ENCODE measurements at regions of chr11 and their contacts with region 1.

Region 1: DNA sequence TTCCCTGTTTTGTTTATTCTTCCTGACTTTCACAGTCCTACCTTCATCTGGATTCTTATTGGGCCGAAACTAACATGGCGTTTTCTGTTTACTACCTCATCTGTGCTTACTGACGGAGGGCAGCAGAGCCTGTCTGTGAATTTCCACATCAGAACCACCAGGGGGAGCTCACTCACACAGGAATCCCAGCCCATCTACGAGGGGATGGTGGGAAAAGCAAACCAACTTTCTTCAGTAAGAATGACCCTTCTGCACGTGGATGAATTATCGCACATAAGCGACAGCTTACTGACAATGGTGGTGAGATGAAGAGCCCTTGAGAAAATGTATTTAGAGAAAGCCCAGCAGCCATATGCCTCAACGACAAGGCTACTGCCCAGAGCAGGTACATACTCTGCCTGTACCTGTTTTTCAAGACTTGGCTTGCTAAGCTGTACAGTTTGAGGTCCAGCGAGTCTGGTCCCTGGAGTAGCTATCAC is 42.5 kb downstream of the LARGE2 start:
- DNase-seq: peak; percentile 77
- CTCF ChIP-seq: peak; percentile 91

Region 2: GRCh38 chr11:45606514-45607281 is 358.3 kb before region 1 on chr11:
- CTCF ChIA-PET with region 1: no interaction called
- POLR2A ChIA-PET with region 1: no interaction called
- DNase-seq: no peak
- CTCF ChIP-seq: no peak

Region 3: GRCh38 chr11:45930031-45930794 is 34.7 kb before region 1 on chr11:
- CTCF ChIA-PET with region 1: interaction called, 23 read pairs
- POLR2A ChIA-PET with region 1: no interaction called
- DNase-seq: peak; percentile 91
- CTCF ChIP-seq: no peak

Region 4: DNA sequence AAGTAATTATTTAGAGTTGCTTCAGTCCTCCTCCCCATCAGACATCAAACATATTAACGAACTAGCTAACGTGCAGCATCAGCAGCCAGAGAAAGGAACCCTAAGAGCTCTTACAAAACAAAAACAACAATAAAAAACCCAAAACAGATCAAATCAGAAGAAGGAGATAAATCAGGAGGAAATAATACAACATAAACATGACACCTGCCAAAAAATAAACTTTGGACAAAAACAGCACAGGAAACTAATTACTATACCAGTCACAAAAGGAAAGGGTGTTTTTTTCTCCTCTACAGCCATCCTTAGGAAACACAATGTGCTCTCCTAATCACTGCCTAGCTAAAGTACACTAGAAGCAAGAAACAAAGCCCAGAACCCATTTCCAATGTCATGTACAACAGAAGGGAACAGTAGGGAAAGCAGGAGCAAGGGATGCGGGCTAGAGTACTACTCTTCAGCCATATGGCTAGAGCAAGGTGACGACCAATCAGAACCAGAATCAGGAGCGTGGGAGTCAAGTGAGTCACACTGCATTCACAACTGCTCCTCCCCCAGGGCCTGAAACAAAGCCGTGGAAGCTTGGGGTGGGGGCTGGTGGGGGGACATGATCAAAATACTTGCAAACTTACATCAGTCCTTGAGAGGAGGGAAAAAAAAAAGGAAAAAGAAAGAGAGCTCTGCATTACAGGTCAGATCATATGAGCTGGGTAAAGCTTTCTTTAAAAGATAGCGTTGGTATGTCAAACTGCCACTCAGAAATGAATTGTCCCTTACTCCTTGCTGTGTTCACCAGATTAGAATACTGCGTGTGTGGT is 17.9 kb after region 1 on chr11:
- CTCF ChIA-PET with region 1: interaction called, 91 read pairs
- POLR2A ChIA-PET with region 1: no interaction called
- DNase-seq: no peak
- CTCF ChIP-seq: no peak

Region 5: DNA sequence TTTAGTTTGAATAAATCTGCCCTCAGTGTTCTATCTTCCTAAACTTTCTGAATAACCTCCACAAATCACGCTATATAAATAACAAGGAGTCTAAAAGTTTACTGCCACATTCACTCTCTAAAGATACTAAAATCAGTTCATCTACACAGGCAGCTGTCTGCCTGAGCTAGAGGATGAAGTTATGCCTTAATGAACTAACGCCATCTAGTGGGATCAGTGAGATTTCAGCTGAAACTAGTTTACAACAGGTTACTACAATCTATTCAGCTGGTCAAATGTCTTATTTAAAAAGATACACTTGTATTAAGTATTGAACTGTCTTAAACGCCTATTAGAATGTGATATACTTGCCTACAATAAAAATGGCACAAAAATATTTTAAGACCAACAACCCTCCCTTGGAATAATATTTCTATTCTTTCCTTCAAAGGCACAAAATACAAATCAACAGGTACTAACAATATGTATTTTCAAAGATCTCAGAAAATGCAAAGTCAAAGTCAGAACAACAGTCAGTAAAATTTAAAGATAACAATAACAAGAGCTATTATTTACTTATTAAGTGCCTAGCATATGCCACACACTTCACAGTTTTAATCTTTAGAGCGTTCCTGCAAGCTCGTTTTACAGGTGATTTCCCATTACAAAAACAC is 41.6 kb after region 1 on chr11:
- CTCF ChIA-PET with region 1: interaction called, 51 read pairs
- POLR2A ChIA-PET with region 1: no interaction called
- DNase-seq: peak; percentile 59
- CTCF ChIP-seq: peak; percentile 67

Region 6: GRCh38 chr11:46036969-46037368 is 72.0 kb after region 1 on chr11:
- CTCF ChIA-PET with region 1: no interaction called
- POLR2A ChIA-PET with region 1: no interaction called
- DNase-seq: no peak
- CTCF ChIP-seq: no peak

Region 7: DNA sequence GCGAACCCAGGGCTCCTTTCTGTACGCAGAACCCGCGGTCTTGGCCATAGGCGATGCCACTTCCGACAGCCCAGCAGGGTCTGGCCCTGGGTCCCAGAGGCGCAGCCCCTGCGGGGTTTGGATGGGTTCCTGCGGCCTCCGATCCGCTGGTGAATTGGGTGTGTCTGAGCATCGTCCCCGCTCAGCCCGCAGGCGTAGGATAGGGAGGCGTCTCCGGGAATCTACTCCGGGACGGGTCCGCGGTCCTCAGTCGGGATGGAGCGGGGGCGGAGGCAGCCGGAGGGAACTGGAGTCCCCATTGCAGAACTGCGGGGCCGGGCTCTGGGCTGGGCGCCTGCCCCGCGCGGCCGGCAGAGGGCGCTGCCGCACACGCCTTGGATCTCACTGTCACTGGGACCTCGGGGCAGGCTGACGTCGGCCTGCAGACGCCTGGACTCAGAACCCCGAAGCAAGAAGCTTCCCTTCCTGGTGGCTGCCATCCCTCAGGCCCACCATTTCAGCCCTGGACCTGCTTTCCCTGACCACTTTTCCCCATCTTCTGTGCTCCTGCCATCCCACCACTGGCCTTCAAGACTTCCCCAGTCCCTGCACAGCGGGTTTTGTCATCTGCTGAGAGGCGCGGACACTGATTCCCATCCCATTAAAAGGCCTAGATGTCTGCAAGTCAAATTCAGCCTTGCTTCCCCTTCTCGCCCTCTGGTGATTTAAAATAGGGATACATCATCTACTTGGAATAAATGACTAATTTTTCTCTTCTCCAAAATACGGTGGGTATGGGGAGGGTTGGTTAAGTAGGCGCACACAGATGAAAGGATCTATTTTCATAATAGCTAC is 274.2 kb after region 1 on chr11:
- CTCF ChIA-PET with region 1: interaction called, 11 read pairs
- POLR2A ChIA-PET with region 1: no interaction called
- DNase-seq: peak; percentile 90
- CTCF ChIP-seq: peak; percentile 99